Right cardiac atrium (tissue), 5 donors: ENCODE measurements at regions of chr5 and their contacts with region 1.

Region 1: DNA sequence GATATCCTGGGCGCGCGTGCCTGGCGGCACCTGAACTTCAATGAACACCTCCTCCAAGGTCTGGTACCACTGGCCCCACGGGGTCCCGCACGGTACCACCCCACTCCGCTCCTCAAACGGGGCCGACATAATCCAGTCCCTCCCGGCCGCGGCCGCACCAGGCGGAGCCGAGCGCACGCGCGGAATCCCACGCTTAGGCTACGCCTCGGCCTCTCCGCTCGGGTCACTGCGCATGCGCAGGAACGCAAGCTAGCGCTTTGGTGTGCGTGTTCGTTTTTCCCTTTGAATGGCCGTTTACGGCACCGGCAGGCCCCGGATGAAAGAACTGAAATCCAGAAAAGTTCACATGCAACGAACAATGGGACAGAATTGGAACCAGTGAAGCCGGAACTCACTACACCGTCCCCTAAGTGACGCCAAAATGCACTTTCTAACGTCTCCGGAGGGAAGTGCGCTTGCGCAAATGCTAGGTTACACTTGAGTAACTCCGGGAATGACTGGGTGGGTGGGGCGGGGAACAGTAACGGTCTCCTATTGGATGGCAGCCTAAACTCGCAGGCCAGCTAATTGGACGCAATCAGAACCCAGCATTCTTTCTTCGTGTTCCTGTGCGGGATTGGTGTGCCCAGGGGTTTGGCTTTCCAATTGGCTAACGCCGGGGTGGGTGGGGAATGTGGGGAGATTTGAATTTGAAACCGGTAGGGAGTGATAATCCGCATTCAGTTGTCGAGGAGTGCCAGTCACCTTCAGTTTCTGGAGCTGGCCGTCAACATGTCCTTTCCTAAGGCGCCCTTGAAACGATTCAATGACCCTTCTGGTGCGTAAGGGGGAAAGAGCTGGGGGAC is at the starts of genes HMMR and NUDCD2:
- DNase-seq: peak; percentile 97 to 99 (median 98)
- ATAC-seq: peak; percentile 97 to 98
- H3K4me3 ChIP-seq: peak within 1 kb of the TSS; percentile 82
- H3K27ac ChIP-seq: peak within 1 kb of the TSS; percentile 96
- H3K4me1 ChIP-seq: peaks cover 2% of the 10 kb centered on the region
- H3K27me3 ChIP-seq: no peaks in the 10 kb centered on the region
- total RNA-seq, gene HMMR: 0.39 to 1.5 (median 0.84) TPM
- total RNA-seq, gene NUDCD2: 12.9 to 17.3 (median 14.9) TPM

Region 2: GRCh38 chr5:163498886-163499285 is 38.7 kb after region 1 on chr5:
- intact Hi-C with region 1: loop called in 3 of 4 experiments (anchors 5 to 10 kb)
- DNase-seq: no peak
- ATAC-seq: no peak
- H3K4me3 ChIP-seq: no peak overlapping the region
- H3K27ac ChIP-seq: no peak overlapping the region
- H3K4me1 ChIP-seq: no peaks in the 10 kb centered on the region
- H3K27me3 ChIP-seq: no peaks in the 10 kb centered on the region

Region 3: DNA sequence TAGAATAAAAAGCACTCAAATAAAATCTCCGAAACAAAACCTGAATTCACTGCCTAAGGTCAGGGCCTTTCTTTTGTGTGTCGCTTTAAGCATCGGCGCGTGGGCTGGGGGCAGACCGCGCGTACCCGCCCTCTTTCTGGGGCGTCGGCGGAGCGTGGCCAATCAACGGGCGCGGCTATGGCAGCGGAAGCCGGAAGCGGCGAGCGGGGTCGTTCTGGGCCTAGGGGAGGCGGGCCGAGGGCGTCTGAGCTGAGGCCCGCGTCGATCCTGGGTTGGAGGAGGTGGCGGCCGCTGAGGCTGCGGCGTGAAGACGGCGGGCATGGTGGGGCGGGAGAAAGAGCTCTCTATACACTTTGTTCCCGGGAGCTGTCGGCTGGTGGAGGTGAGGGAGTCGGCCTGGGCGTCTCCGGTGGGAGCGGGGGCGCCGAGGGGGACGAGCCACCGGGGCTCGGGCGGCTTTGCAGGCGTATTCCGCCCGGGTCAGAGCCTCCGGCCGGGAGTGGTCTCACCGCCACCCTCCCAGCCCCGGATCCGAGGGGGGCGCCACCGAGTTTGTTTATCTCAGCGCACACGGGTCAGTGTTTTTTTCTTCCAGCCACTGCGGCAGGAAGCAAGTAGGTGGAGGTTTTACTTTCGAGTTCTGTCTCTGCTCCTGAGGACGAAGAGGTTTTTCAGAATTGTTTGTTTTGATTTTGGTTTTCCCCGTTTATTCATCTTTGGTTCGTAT is 45.4 kb after region 1 on chr5 and contains the start of gene MAT2B:
- intact Hi-C with region 1: loop called in 2 of 4 experiments (anchors 5 to 10 kb)
- DNase-seq: peak; percentile 97 to 99 (median 98)
- ATAC-seq: peak; percentile 99
- H3K4me3 ChIP-seq: peak within 1 kb of the TSS; percentile 76
- H3K27ac ChIP-seq: peak within 1 kb of the TSS; percentile 97
- H3K4me1 ChIP-seq: peaks cover 2% of the 10 kb centered on the region
- H3K27me3 ChIP-seq: no peaks in the 10 kb centered on the region
- total RNA-seq, gene MAT2B: 60.5 to 90.4 (median 75.3) TPM